ENCODE measurements at regions of chr5 and their contacts with region 1.

Region 1: GRCh38 chr5:135208903-135209721 is 175.1 kb upstream of the PITX1 start:
- DNase-seq: peak; percentile 79
- H3K4me3 ChIP-seq: no peak overlapping the region
- H3K27ac ChIP-seq: peak overlapping the region; percentile 43 to 85 (median 54)
- H3K4me1 ChIP-seq: peaks cover 0 to 49% (median 34%) of the 10 kb centered on the region in 4 donors
- H3K27me3 ChIP-seq: no peaks in the 10 kb centered on the region
- CTCF ChIP-seq: no peak
- EP300 ChIP-seq: peak in 1 of 4 donors; percentile 15
- POLR2A ChIP-seq: no peak

Region 2: GRCh38 chr5:135242021-135242865 is 33.1 kb after region 1 on chr5:
- intact Hi-C with region 1: loop called (anchors 1 kb)
- DNase-seq: peak; percentile 48
- H3K4me3 ChIP-seq: no peak overlapping the region
- H3K27ac ChIP-seq: peak overlapping the region; percentile 69 to 95 (median 92)
- H3K4me1 ChIP-seq: peaks cover 0 to 91% (median 85%) of the 10 kb centered on the region in 4 donors
- H3K27me3 ChIP-seq: no peaks in the 10 kb centered on the region
- CTCF ChIP-seq: no peak
- EP300 ChIP-seq: peak in 1 of 4 donors; percentile 16
- POLR2A ChIP-seq: no peak

Region 3: DNA sequence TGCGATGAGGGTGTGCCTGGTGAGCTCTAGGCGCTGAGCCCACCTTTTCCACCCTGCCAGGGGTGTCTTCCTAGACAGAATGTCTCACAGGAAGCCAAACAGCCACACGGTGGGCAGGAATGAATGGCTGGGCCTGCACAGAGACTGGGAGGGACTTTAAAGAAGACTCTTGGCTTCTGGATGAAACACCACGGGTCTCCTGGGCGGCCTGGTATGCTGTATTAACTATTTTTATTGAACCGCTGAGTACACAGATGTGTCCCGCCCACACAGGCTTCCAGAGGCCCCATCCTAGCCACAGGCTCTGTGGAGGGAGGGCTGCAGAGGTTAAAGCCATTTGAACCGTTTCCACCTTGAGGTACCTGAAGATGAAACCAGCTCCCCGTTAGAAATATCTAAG is 484.9 kb after region 1 on chr5:
- intact Hi-C with region 1: no loop called
- DNase-seq: no peak
- H3K4me3 ChIP-seq: no peak overlapping the region
- H3K27ac ChIP-seq: no peak overlapping the region
- H3K4me1 ChIP-seq: no peaks in the 10 kb centered on the region
- H3K27me3 ChIP-seq: no peaks in the 10 kb centered on the region
- CTCF ChIP-seq: no peak
- EP300 ChIP-seq: no peak
- POLR2A ChIP-seq: no peak

Region 4: DNA sequence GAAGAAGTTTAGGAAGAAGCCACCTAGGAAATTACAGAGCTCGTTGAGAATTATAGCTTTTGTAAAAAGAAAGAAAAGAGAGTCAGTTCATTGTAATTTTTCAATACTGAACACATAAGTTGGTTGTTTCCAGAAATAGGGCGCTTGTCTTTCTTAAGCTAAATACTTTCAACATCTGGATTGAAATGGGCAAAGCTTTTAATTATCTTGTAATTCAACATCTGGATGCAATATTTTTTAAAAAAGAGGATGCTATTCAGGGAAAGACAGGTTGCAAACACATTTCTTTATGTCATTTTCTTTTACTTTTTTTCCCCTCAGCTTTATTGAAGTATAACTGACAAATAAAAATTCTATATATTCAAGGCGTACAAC is 1256.9 kb after region 1 on chr5:
- intact Hi-C with region 1: no loop called
- DNase-seq: no peak
- H3K4me3 ChIP-seq: no peak overlapping the region
- H3K27ac ChIP-seq: no peak overlapping the region
- H3K4me1 ChIP-seq: no peaks in the 10 kb centered on the region
- H3K27me3 ChIP-seq: no peaks in the 10 kb centered on the region
- CTCF ChIP-seq: no peak
- EP300 ChIP-seq: no peak
- POLR2A ChIP-seq: no peak